Activated B cell treated with CpG ODN at 0.5 μM for 24 hours (primary cell): ENCODE measurements at regions of chr2 and their contacts with region 1.

Region 1: GRCh38 chr2:102240640-102241370 is 54.0 kb downstream of the IL1RL2 start:
- DNase-seq: peak; percentile 72
- ATAC-seq: peak; percentile 91
- H3K4me3 Mint-ChIP-seq: no peak overlapping the region
- H3K27ac Mint-ChIP-seq: no peak overlapping the region
- H3K4me1 Mint-ChIP-seq: peaks cover 22% of the 10 kb centered on the region
- H3K27me3 Mint-ChIP-seq: peaks cover 14% of the 10 kb centered on the region
- CTCF ChIP-seq: peak; percentile 89

Region 2: DNA sequence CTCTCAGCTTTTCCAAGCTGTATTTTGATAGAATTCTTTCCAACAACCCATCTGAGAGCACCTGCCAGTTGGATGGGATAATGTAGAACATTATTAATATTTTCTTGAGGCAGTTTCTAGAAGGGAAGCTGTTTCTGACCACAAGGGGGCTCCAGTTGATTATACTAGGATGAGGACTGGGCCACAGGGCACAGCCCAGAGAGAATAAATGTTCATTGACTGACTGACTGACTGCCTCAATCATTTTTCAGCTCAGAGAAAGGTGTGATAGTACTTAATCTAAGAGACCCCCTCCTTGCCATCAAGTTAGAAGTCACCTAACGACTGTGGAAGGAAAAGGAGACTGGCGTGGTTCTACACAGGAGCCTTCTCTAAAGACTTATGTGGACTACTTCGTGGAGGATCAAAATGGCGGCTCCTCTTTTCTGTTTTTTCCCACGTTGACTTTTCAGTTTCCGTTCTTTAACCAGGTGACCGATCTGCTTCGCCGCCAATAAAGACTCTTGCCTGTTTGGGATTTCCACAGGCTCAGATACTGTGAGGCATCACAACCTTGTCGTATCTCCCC is 821.6 kb before region 1 on chr2:
- CTCF ChIA-PET with region 1: interaction called, 14 read pairs
- POLR2A ChIA-PET with region 1: no interaction called
- intact Hi-C with region 1: no loop called
- DNase-seq: no peak
- ATAC-seq: peak; percentile 88
- H3K4me3 Mint-ChIP-seq: no peak overlapping the region
- H3K27ac Mint-ChIP-seq: no peak overlapping the region
- H3K4me1 Mint-ChIP-seq: peaks cover 6% of the 10 kb centered on the region
- H3K27me3 Mint-ChIP-seq: no peaks in the 10 kb centered on the region
- CTCF ChIP-seq: no peak

Region 3: DNA sequence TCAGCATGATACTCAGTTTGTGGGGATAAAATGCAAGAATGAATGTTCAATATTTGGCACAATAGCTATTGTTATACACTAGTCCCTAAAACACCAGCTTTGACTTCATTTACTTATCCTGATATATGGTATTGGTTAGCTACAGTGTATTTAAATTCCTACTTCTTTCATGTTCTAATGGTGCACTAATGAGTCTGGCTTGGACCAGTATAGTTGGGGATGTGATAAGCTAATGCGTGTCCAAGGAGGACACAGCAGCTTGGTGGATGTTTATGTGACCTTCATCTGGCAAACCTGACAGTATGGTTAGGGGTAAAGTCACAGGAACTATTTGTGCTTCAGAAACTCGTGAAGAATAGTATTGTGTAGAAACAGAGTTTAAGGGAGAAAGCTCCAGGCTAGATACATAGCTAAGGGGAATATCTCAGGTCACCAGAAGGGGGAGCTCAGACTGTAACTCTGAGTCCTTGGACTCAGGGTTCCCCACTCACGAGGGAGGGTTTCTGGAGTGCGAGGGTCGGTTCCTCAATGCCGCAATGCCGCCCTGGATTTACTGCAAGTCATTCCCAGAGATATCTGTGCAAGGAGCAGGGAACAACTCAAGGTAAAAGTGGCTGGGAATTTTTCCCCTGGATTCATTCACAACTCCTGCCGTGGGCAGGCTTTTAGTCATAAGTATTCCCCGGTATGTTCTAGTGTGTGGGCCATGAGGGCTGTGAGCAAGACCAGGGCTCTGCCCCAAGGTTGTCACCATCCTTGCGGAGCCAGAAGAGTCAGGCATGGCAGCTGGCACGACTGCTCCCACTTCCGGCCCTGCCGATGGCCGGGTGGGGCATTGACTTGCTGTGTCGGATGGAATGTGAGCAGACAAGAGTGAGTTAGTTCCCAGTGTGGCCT is 234.6 kb before region 1 on chr2:
- CTCF ChIA-PET with region 1: interaction called, 35 read pairs
- POLR2A ChIA-PET with region 1: no interaction called
- intact Hi-C with region 1: no loop called
- DNase-seq: no peak
- ATAC-seq: no peak
- H3K4me3 Mint-ChIP-seq: no peak overlapping the region
- H3K27ac Mint-ChIP-seq: no peak overlapping the region
- H3K4me1 Mint-ChIP-seq: peaks cover 7% of the 10 kb centered on the region
- H3K27me3 Mint-ChIP-seq: peaks cover 3% of the 10 kb centered on the region
- CTCF ChIP-seq: no peak

Region 4: GRCh38 chr2:102033031-102033749 is 207.6 kb before region 1 on chr2:
- CTCF ChIA-PET with region 1: interaction called, 17 read pairs
- POLR2A ChIA-PET with region 1: no interaction called
- intact Hi-C with region 1: no loop called
- DNase-seq: peak; percentile 19
- ATAC-seq: peak; percentile 61
- H3K4me3 Mint-ChIP-seq: peak overlapping the region; percentile 21
- H3K27ac Mint-ChIP-seq: peak overlapping the region; percentile 30
- H3K4me1 Mint-ChIP-seq: peaks cover 20% of the 10 kb centered on the region
- H3K27me3 Mint-ChIP-seq: peaks cover 2% of the 10 kb centered on the region
- CTCF ChIP-seq: no peak

Region 5: GRCh38 chr2:102442967-102443828 is 202.4 kb after region 1 on chr2:
- CTCF ChIA-PET with region 1: interaction called, 22 read pairs
- POLR2A ChIA-PET with region 1: no interaction called
- intact Hi-C with region 1: loop called (anchors 1 kb)
- DNase-seq: no peak
- ATAC-seq: peak; percentile 49
- H3K4me3 Mint-ChIP-seq: no peak overlapping the region
- H3K27ac Mint-ChIP-seq: no peak overlapping the region
- H3K4me1 Mint-ChIP-seq: peaks cover 2% of the 10 kb centered on the region
- H3K27me3 Mint-ChIP-seq: no peaks in the 10 kb centered on the region
- CTCF ChIP-seq: no peak